Psoas muscle (tissue), 8 donors: ENCODE measurements at regions of chr7 and their contacts with region 1.

Region 1: DNA sequence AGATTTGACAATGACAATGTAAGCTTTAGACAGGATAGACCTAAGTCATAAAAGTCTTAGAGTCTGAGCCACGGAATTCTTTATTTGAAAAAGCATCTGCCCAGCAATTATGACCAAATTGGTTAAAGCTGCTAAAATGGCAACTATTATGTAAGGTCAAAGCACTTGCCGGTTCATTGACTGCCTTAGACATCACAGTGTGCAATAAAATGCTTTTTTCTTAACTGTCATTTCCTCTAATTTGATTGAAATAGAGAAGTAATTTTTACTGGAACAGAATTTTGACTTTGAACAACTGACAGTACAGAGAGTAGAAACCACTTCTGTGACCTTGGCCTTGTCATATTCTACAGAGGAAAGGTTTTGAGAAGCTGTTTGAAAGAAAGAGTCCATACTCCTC is 142.9 kb downstream of the THSD7A start:
- DNase-seq: no peak
- ATAC-seq: no peak
- H3K4me3 ChIP-seq: no peak overlapping the region
- H3K27ac ChIP-seq: no peak overlapping the region
- H3K4me1 ChIP-seq: no peaks in the 10 kb centered on the region
- H3K27me3 ChIP-seq: no peaks in the 10 kb centered on the region
- CTCF ChIP-seq: no peak

Region 2: DNA sequence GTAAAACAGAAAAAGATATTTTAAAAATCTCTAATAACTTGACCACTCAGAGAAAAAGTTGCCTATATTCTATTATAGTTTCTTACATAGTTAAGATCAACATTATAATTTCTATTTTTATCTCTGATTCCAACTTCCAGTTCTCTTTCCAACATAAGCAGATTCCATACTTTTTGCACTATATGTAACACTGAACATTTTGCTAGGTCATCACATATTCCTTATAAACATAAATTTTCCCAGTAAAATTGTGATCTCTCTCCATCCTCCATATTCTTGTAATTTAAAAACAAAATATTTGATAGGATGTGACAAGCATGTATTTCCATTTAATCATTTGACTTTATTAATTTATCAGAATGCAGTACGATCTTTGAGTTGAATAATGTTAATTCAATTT is 313.3 kb after region 1 on chr7:
- intact Hi-C with region 1: no loop called
- DNase-seq: no peak
- ATAC-seq: no peak
- H3K4me3 ChIP-seq: no peak overlapping the region
- H3K27ac ChIP-seq: no peak overlapping the region
- H3K4me1 ChIP-seq: no peaks in the 10 kb centered on the region
- H3K27me3 ChIP-seq: no peaks in the 10 kb centered on the region
- CTCF ChIP-seq: no peak

Region 3: GRCh38 chr7:13673290-13673689 is 1984.2 kb after region 1 on chr7:
- intact Hi-C with region 1: loop called in 1 of 2 experiments (anchors 10 kb)
- DNase-seq: no peak
- ATAC-seq: no peak
- H3K4me3 ChIP-seq: no peak overlapping the region
- H3K27ac ChIP-seq: no peak overlapping the region
- H3K4me1 ChIP-seq: no peaks in the 10 kb centered on the region
- H3K27me3 ChIP-seq: no peaks in the 10 kb centered on the region
- CTCF ChIP-seq: no peak